ENCODE measurements at regions of chr13 and their contacts with region 1.

Region 1: GRCh38 chr13:27424246-27425157 is at the start of gene GTF3A:
- H3K4me3 Mint-ChIP-seq: peak within 1 kb of the TSS; percentile 73
- H3K27ac Mint-ChIP-seq: peak within 1 kb of the TSS; percentile 83
- H3K4me1 Mint-ChIP-seq: peaks cover 40% of the 10 kb centered on the region
- H3K27me3 Mint-ChIP-seq: no peaks in the 10 kb centered on the region

Region 2: DNA sequence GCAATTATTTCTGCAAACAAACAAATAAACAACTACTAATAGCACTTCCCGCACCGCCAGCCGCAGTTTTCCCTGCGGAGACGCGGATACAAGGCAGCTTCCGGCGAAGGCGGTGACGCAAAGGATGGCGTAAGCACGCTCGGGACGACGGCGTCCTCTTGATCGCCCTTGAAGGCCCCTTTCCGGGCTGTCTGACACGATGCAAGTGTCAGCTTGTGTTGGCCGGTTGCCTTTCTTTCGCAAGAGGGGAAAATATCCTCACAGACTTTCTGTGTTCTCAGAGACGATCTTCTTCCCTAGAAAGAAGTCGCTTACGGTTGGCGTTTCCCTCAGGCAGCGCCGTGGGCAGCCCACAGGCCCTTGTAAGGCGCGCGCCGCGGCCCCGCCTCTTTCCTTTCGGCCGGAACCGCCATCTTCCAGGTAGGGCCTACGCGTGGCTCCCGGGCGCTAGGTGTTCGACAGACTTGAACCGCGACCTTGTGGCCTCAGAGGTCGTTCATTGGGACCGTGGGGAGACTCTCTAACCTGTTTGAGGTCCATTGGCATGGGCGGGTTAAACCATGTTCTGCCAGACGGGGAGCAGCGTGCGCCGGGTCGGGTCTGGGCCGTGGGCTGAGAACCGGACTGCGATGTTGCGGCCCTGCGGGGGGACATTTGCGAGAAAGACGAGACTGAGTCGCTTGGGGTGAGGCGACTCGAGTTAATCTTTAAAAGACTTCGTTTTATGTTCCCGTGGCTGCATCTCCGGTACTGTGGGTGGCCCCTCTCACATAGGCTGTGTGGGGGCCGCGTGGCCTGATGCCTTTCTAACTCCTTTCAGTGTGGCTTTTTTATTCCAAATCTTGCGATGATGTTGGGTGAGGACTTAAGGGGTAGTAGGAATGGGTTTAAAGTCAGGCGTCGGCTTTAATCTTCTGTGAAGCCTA is 173.1 kb before region 1 on chr13 and contains the start of gene RPL21:
- intact Hi-C with region 1: loop called (anchors 10 kb)
- H3K4me3 Mint-ChIP-seq: peak within 1 kb of the TSS; percentile 88
- H3K27ac Mint-ChIP-seq: peak within 1 kb of the TSS; percentile 97
- H3K4me1 Mint-ChIP-seq: peaks cover 25% of the 10 kb centered on the region
- H3K27me3 Mint-ChIP-seq: no peaks in the 10 kb centered on the region

Region 3: GRCh38 chr13:27449936-27450828 is 25.7 kb after region 1 on chr13 and contains the start of gene MTIF3:
- intact Hi-C with region 1: loop called (anchors 1 kb)
- H3K4me3 Mint-ChIP-seq: peak within 1 kb of the TSS; percentile 91
- H3K27ac Mint-ChIP-seq: peak within 1 kb of the TSS; percentile 88
- H3K4me1 Mint-ChIP-seq: peaks cover 42% of the 10 kb centered on the region
- H3K27me3 Mint-ChIP-seq: peaks cover 7% of the 10 kb centered on the region

Region 4: DNA sequence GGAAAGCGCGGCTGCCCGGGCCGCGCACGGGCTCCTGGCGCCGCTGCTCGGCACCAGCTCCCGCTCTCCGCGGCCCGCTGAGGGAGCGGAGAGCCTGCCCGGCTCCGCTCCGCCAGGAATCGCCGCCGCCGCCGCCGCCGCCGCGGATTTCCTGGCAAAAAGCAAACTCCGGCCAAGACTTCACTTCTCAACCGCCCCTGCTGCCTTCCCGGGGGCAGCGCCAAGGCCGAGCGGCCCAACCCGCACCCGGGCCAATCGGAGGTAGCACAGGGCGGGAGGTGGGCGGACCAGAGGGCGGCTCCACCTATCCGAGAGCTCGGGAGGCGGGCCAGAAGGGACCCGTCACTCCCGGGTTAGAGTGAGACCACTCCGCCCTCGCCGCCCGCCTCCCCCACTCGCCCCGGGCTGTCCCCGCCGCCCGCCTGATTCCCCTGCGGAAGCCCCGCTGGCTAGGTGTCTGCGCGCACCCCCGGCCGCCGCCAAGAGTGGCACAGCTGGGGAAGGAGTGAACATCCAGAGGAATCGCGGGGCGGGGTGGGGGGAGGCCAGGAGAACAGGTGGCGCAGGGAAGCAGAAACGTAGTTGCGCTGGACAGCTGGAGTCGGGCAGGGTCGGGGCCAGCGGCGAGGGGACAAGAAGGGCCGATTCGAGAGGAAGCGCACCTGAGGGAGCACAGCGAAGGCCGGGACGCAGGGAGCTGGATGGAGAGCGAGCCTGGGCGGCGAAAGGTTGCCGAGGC is 196.0 kb after region 1 on chr13 and contains the start of gene LNX2:
- intact Hi-C with region 1: loop called (anchors 2 kb)
- H3K4me3 Mint-ChIP-seq: peak within 1 kb of the TSS; percentile 86
- H3K27ac Mint-ChIP-seq: peak within 1 kb of the TSS; percentile 87
- H3K4me1 Mint-ChIP-seq: peaks cover 65% of the 10 kb centered on the region
- H3K27me3 Mint-ChIP-seq: no peaks in the 10 kb centered on the region